Vagina (tissue), 2 donors: ENCODE measurements at regions of chrX and their contacts with region 1.

Region 1: GRCh38 chrX:11185861-11186260 is 74.7 kb downstream of the HCCS start:
- DNase-seq: no peak
- H3K4me3 ChIP-seq: no peak overlapping the region
- H3K27ac ChIP-seq: no peak overlapping the region
- H3K4me1 ChIP-seq: no peaks in the 10 kb centered on the region
- H3K27me3 ChIP-seq: no peaks in the 10 kb centered on the region
- CTCF ChIP-seq: no peak
- POLR2A ChIP-seq: no peak

Region 2: GRCh38 chrX:11117745-11118144 is 68.1 kb before region 1 on chrX:
- intact Hi-C with region 1: loop called (anchors 2 kb)
- DNase-seq: no peak
- H3K4me3 ChIP-seq: no peak overlapping the region
- H3K27ac ChIP-seq: no peak overlapping the region
- H3K4me1 ChIP-seq: peaks cover 4% of the 10 kb centered on the region
- H3K27me3 ChIP-seq: no peaks in the 10 kb centered on the region
- CTCF ChIP-seq: no peak
- POLR2A ChIP-seq: no peak

Region 3: DNA sequence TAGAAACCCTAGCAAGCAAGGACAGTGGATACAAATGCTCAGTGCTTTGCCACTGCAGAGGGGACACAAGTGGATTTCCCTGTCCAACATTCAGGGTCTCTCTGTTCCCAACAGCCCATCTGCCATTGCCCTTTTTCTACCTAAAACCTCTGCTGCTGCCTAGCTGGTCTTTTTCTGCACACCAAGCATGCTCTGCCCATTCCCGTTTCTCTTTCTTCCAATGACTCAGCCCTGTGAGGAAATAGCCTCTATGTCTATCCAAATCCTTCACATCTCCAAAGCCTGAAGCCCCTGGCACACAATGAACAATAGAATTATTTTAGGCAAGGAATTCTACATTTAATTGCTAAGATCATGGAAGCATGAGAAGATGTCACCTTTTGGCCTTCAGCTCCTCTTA is 101.6 kb after region 1 on chrX:
- intact Hi-C with region 1: no loop called
- DNase-seq: no peak
- H3K4me3 ChIP-seq: no peak overlapping the region
- H3K27ac ChIP-seq: no peak overlapping the region
- H3K4me1 ChIP-seq: no peaks in the 10 kb centered on the region
- H3K27me3 ChIP-seq: no peaks in the 10 kb centered on the region
- CTCF ChIP-seq: no peak
- POLR2A ChIP-seq: no peak